Activated T-helper 1 cell treated with anti-CD3 and anti-CD28 coated beads, Interleukin-12 subunit alpha, Interleukin-12 subunit beta, Interleukin-2, Interleukin-4 antibody, amounts not matched to agents 30 ng/mL and 10 ng/mL and 1 ng/mL, durations not matched to agents 14 hours and 24 hours and 36 hours (primary cell): ENCODE measurements at regions of chr6 and their contacts with region 1.

Region 1: DNA sequence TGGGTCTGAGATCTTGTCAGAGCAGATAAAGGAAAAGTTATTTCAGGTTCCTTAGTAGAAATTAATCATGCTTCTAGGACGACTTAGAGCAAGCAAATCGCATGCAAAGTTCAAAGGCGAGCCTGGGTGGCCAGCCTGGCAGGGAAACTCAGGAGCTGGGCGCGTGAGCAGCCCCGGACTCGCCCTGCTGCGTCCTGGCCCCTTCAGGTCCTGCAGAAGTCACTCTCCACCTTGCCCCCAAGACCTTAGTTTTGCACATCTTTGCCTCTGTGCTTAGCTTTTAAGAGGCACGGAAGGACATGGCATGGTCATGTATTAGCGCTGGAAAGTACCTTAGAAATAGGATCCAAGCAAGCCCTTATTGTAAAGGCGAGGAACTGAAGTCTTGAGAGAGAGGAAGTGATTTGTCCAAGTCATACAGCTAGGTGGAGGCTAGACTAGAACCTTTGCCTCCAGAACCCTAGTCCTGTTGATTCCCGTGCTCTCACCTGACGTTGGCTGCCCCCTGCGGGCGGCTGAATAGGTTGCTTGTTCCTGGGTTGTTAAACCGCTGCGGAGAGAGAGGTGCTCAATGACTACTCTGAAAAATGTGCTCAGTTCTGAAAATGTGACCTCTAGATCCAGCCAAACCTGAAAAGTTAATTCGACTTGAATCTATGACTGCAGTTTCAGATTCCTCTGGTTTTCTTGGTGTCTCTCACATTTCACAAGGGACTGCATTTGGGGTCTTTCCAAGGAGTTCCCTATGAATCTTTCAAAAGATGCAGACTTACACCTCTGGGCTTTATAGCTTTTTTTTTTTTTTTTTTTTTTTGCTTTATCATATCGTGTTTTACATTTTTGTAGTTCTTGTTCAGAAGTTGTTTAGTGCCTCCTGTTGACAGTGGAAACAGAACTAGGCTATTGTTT is 2.7 kb downstream of the MYB start:
- DNase-seq: peak; percentile 77
- H3K4me3 Mint-ChIP-seq: peak overlapping the region; percentile 97
- H3K27ac Mint-ChIP-seq: peak overlapping the region; percentile 81
- H3K4me1 Mint-ChIP-seq: peaks cover 47% of the 10 kb centered on the region
- H3K27me3 Mint-ChIP-seq: no peaks in the 10 kb centered on the region

Region 2: DNA sequence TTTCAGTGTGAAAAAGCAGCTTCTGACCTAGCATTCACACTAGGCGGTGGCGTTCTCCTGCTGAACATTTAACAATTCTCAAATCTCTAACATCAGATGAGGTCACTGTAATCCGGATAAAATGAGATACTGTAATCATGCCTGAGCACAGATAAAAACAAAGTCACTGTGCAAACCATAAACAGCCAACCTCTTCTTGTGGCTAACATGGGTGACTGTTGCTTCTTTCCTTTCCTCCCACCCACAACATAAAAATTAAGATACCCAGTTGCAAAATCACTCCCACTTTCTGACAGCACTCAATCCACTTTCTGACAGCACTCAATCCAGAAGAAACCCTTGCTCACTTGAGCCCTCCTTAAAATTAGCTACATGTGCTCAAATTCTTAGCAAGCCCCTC is 222.4 kb before region 1 on chr6:
- intact Hi-C with region 1: loop called (anchors 1 kb)
- DNase-seq: no peak
- H3K4me3 Mint-ChIP-seq: no peak overlapping the region
- H3K27ac Mint-ChIP-seq: peak overlapping the region; percentile 5
- H3K4me1 Mint-ChIP-seq: peaks cover 22% of the 10 kb centered on the region
- H3K27me3 Mint-ChIP-seq: no peaks in the 10 kb centered on the region

Region 3: DNA sequence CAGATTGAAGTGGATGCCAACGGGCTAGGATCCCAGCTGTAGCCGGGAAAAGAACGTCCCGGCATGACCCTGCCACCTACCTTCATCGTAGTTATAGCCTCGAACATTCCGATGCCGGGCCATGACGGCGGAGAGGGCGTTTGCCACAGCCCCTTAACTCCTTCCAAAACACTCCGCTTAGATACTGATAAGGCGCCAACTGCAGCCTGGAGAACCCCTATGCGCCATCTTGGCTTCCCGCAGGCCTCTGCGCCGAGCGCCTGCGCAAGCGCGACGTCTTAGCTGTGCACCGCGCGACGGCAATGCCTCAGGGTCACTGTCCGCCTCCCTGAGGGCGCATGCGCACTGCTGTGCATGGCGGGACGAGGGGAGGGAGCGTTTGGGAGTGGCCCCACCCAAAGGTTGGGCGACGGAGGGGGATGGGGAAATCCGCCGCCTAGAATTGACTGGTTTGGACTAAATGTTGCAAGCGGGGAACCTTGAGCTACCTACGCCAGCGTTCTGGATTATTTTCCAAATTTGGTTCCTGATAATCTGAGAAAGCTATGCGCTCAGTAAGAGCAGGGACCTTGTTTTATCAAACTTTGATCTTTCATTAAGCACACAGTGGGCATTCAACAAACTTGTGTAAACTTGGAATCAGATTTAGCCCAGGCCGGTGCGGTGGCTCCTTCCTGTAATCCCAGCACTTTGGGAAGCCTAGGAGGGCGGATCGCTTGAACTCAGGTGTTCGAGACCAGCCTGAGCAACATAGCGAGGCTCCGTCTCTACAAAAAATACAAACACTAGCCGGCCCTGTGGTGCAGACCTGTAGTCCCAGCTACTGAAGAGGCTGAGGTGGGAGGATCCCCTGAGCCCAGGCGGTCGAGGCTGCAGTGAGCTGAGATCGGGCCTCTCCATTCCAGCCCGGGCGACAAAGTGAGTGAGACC is 129.0 kb before region 1 on chr6 and contains the start of gene HBS1L:
- intact Hi-C with region 1: loop called (anchors 1 kb)
- DNase-seq: peak; percentile 99
- H3K4me3 Mint-ChIP-seq: peak within 1 kb of the TSS; percentile 94
- H3K27ac Mint-ChIP-seq: peak within 1 kb of the TSS; percentile 96
- H3K4me1 Mint-ChIP-seq: peaks cover 42% of the 10 kb centered on the region
- H3K27me3 Mint-ChIP-seq: peaks cover 2% of the 10 kb centered on the region
- total RNA-seq, gene HBS1L: 104 and 115 TPM in 2 replicates

Region 4: GRCh38 chr6:135145063-135145800 is 38.6 kb before region 1 on chr6:
- intact Hi-C with region 1: loop called (anchors 1 kb)
- DNase-seq: no peak
- H3K4me3 Mint-ChIP-seq: peak overlapping the region; percentile 55
- H3K27ac Mint-ChIP-seq: peak overlapping the region; percentile 83
- H3K4me1 Mint-ChIP-seq: peaks cover 80% of the 10 kb centered on the region
- H3K27me3 Mint-ChIP-seq: no peaks in the 10 kb centered on the region

Region 5: GRCh38 chr6:135212020-135212806 is 28.4 kb after region 1 on chr6:
- intact Hi-C with region 1: loop called (anchors 2 kb)
- DNase-seq: no peak
- H3K4me3 Mint-ChIP-seq: peak overlapping the region; percentile 72
- H3K27ac Mint-ChIP-seq: peak overlapping the region; percentile 90
- H3K4me1 Mint-ChIP-seq: peaks cover 63% of the 10 kb centered on the region
- H3K27me3 Mint-ChIP-seq: no peaks in the 10 kb centered on the region

Region 6: DNA sequence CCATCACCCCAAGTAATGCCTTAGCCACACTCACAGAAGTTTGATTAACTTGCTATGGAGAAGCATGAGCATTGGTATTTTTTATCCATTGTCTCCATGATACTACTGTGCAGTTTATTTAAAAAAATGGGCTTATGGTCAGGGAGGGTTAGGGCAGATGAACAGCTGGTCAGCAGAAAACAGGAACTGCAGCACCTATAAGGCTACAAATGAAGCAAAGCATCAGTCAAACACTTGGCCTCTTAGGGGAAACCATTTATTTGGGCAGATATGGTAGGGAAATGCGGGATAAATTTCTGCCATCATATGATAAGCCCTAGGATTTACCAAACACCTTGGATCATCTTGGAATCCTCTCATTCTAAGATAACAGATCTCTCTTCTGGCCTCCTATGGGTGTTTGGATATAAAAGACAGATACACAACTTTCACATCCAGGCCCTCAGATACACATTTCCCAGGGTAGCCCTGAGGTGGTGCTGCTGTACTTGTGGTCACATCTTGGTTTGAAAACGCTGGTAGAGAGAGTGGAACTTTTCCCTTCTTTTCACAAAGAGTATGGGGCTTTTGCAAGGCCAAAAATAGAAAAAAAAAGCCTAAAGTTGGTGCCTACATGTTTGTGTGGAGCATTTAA is 356.5 kb after region 1 on chr6:
- intact Hi-C with region 1: no loop called
- DNase-seq: peak; percentile 12
- H3K4me3 Mint-ChIP-seq: peak overlapping the region; percentile 4
- H3K27ac Mint-ChIP-seq: peak overlapping the region; percentile 85
- H3K4me1 Mint-ChIP-seq: peaks cover 75% of the 10 kb centered on the region
- H3K27me3 Mint-ChIP-seq: no peaks in the 10 kb centered on the region